Natural killer cell (primary cell): ENCODE measurements at regions of chr17 and their contacts with region 1.

Region 1: DNA sequence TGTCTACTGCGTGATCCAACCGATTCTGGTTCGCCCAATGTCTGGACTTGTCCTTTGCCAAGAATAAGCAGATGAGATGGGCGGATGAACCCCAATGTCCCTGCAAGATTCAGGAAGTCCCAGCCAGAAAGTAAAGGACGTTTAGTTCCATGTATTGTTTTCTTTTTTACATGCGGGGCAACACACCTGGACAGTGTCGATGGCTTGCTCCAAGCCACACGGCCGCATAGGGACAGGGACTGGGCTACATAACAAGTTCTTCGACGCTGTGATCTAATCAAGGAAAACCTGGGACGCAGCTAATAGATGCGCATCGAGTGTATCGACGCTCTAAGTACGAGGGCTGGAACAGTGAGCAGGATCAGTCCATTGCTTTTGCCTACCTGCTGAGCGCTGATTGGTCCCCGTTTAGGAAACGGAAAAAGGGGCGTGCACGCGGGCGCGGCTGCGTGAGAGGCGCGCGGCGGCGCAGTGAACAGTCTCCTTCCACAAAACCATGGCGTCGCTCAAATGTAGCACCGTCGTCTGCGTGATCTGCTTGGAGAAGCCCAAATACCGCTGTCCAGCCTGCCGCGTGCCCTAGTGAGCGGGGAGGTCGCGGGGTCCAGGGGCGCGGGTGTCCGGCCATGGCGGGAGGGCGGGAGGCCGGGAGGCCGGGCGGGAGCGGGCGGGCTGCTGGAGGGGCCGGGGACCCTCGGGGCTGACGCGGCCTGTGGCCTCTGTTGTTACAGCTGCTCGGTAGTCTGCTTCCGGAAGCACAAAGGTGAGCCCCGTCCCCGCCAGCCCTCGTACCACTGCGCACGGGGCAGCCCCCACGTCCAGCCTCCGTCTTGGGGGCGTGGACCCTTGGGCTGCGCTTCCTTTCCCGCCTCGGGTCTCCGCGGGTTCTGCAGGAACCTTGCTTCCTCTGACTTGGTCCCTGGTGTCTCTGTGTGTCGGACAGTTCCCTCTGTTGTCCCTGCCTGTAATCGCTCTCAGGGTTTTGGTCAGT is at the start of gene ZNHIT3:
- DNase-seq: peak; percentile 89 to 96
- ATAC-seq: peak; percentile 93 to 97 (median 95)
- H3K4me3 ChIP-seq: peak within 1 kb of the TSS; percentile 93
- H3K4me3 Mint-ChIP-seq: peak within 1 kb of the TSS; percentile 99
- H3K27ac ChIP-seq: peak within 1 kb of the TSS; percentile 57
- H3K27ac Mint-ChIP-seq: peak within 1 kb of the TSS; percentile 88 to 96
- H3K4me1 ChIP-seq: peaks cover 39% of the 10 kb centered on the region
- H3K4me1 Mint-ChIP-seq: peaks cover 43 to 58% of the 10 kb centered on the region in 2 donors
- H3K27me3 ChIP-seq: peaks cover 7% of the 10 kb centered on the region
- H3K27me3 Mint-ChIP-seq: peaks cover 10 to 14% of the 10 kb centered on the region in 2 donors
- CTCF ChIP-seq: no peak
- total RNA-seq, gene ZNHIT3: 27.1 to 41.3 (median 36.6) TPM

Region 2: GRCh38 chr17:35808962-35809854 is 677.3 kb before region 1 on chr17 and contains the start of gene TAF15:
- intact Hi-C with region 1: loop called (anchors 1 kb)
- DNase-seq: peak; percentile 97
- ATAC-seq: peak; percentile 90 to 98 (median 92)
- H3K4me3 ChIP-seq: peak within 1 kb of the TSS; percentile 91
- H3K4me3 Mint-ChIP-seq: peak within 1 kb of the TSS; percentile 90
- H3K27ac ChIP-seq: peak within 1 kb of the TSS; percentile 94
- H3K27ac Mint-ChIP-seq: peak within 1 kb of the TSS; percentile 98
- H3K4me1 ChIP-seq: peaks cover 18% of the 10 kb centered on the region
- H3K4me1 Mint-ChIP-seq: peaks cover 52 to 55% of the 10 kb centered on the region in 2 donors
- H3K27me3 ChIP-seq: no peaks in the 10 kb centered on the region
- H3K27me3 Mint-ChIP-seq: no peaks in the 10 kb centered on the region
- CTCF ChIP-seq: peak; percentile 81
- total RNA-seq, gene TAF15: 214 to 253 (median 214) TPM

Region 3: GRCh38 chr17:35969558-35970380 is 516.7 kb before region 1 on chr17:
- intact Hi-C with region 1: loop called (anchors 2 kb)
- DNase-seq: peak; percentile 73 to 85
- ATAC-seq: peak; percentile 78 to 93 (median 88)
- H3K4me3 ChIP-seq: no peak overlapping the region
- H3K4me3 Mint-ChIP-seq: peak overlapping the region; percentile 28
- H3K27ac ChIP-seq: no peak overlapping the region
- H3K27ac Mint-ChIP-seq: peak overlapping the region in 1 of 2 donors; percentile 78
- H3K4me1 ChIP-seq: peaks cover 8% of the 10 kb centered on the region
- H3K4me1 Mint-ChIP-seq: peaks cover 10 to 22% of the 10 kb centered on the region in 2 donors
- H3K27me3 ChIP-seq: no peaks in the 10 kb centered on the region
- H3K27me3 Mint-ChIP-seq: no peaks in the 10 kb centered on the region
- CTCF ChIP-seq: peak; percentile 81

Region 4: DNA sequence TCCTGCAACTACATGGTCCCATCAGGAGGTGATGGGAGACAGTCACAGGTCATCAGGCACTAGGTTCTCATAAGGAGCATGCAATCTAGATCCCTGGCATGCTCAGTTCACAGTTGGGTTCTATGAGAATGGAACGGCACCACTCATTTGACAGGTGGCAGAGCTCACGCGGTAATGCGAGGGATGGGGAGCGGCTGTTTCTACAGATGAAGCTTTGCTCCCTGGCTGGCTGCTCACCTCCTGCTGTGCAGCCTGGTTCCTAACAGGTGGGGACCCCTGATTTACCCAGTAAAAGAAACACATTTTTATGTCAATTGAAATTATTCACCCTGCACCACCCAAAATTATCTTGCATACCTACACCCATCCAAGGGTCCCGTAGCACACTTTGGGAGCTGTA is 42.7 kb before region 1 on chr17:
- intact Hi-C with region 1: no loop called
- DNase-seq: no peak
- ATAC-seq: no peak
- H3K4me3 ChIP-seq: no peak overlapping the region
- H3K4me3 Mint-ChIP-seq: no peak overlapping the region
- H3K27ac ChIP-seq: no peak overlapping the region
- H3K27ac Mint-ChIP-seq: no peak overlapping the region
- H3K4me1 ChIP-seq: no peaks in the 10 kb centered on the region
- H3K4me1 Mint-ChIP-seq: no peaks in the 10 kb centered on the region
- H3K27me3 ChIP-seq: no peaks in the 10 kb centered on the region
- H3K27me3 Mint-ChIP-seq: no peaks in the 10 kb centered on the region
- CTCF ChIP-seq: no peak

Region 5: DNA sequence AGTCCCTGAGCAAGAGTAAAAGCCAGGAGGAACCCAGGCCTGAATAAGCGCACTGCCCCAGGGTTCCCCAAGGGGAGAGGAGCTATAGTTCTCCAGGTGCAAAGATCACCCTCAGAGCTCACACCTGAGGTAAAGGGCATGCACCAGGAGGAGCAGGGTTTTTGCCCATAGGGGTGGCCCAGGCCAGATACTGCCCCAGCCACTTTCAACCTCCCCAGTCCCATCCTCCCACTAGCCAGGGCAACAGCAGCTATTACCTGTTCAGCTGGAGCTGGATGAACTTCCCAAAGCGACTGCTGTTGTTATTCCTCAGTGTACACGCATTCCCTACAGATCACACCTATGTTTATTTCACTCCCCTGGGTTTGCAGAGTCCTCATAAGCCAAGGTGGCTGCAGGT is 28.4 kb after region 1 on chr17:
- intact Hi-C with region 1: no loop called
- DNase-seq: no peak
- ATAC-seq: no peak
- H3K4me3 ChIP-seq: no peak overlapping the region
- H3K4me3 Mint-ChIP-seq: no peak overlapping the region
- H3K27ac ChIP-seq: no peak overlapping the region
- H3K27ac Mint-ChIP-seq: no peak overlapping the region
- H3K4me1 ChIP-seq: no peaks in the 10 kb centered on the region
- H3K4me1 Mint-ChIP-seq: no peaks in the 10 kb centered on the region
- H3K27me3 ChIP-seq: no peaks in the 10 kb centered on the region
- H3K27me3 Mint-ChIP-seq: no peaks in the 10 kb centered on the region
- CTCF ChIP-seq: no peak

Region 6: GRCh38 chr17:36534840-36535668 is 48.6 kb after region 1 on chr17 and contains the starts of genes MYO19 and PIGW:
- intact Hi-C with region 1: loop called (anchors 1 kb)
- DNase-seq: peak; percentile 81 to 92
- ATAC-seq: peak; percentile 84 to 90 (median 85)
- H3K4me3 ChIP-seq: peak within 1 kb of the TSS; percentile 100
- H3K4me3 Mint-ChIP-seq: peak within 1 kb of the TSS; percentile 98
- H3K27ac ChIP-seq: peak within 1 kb of the TSS; percentile 98
- H3K27ac Mint-ChIP-seq: peak within 1 kb of the TSS; percentile 96 to 99
- H3K4me1 ChIP-seq: peaks cover 19% of the 10 kb centered on the region
- H3K4me1 Mint-ChIP-seq: peaks cover 21 to 28% of the 10 kb centered on the region in 2 donors
- H3K27me3 ChIP-seq: no peaks in the 10 kb centered on the region
- H3K27me3 Mint-ChIP-seq: no peaks in the 10 kb centered on the region
- CTCF ChIP-seq: no peak
- total RNA-seq, gene MYO19: 84.2 to 119 (median 104) TPM
- total RNA-seq, gene PIGW: 4.6 to 8.3 (median 5.0) TPM